B cell (primary cell): ENCODE measurements at regions of chr5 and their contacts with region 1.

Region 1: DNA sequence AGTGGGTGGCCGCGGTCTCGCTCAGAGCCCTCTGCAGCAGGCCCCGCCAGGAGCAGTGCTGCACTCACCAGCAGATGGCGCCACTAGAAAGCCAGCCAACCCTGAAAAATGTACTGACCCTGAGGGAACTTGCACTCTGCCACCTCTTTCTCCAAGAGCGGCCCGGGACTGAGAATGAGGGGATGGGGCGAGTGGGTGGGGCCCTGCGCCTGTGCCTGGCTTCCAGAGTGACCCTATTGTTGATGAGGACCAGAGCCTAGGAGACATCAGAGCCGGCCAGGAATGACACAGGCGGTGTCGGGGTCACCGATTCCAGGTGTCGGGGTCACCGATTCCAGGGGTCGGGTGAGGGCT is 2.9 kb upstream of the IL17B start:
- DNase-seq: peak; percentile 68
- ATAC-seq: peak; percentile 73
- H3K4me3 ChIP-seq: no peak overlapping the region
- H3K4me3 Mint-ChIP-seq: no peak overlapping the region
- H3K27ac ChIP-seq: no peak overlapping the region
- H3K27ac Mint-ChIP-seq: no peak overlapping the region
- H3K4me1 ChIP-seq: peaks cover 0 to 5% of the 10 kb centered on the region in 2 donors
- H3K4me1 Mint-ChIP-seq: peaks cover 2% of the 10 kb centered on the region
- H3K27me3 ChIP-seq: no peaks in the 10 kb centered on the region
- H3K27me3 Mint-ChIP-seq: no peaks in the 10 kb centered on the region
- CTCF ChIP-seq: peak; percentile 83

Region 2: DNA sequence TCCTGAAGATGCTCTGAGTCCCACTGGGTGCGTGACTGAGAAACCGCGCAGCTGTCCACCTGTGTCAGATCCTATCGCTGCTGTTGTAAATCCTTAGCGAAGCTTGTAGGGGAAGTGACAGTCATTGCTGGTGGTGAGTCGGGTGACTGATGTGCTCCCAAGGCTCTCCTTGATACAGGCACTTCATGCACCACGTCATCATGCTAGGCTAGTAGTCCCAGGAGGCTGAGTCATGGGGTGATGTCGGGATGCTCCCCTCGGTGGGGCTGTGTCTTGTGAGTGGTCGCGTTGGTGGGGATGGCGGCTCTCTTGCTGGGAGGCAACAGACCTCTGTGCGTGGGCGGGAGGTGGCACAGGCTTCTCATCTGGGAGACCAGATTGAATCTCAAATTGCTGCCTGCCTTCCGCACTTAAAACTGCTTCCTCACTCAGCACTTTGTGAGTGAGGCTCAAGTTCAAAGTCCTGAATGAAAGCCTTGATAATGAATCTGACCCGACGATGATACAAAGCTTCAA is 84.6 kb after region 1 on chr5:
- CTCF ChIA-PET with region 1: no interaction called
- POLR2A ChIA-PET with region 1: no interaction called
- intact Hi-C with region 1: no loop called
- DNase-seq: no peak
- ATAC-seq: no peak
- H3K4me3 ChIP-seq: no peak overlapping the region
- H3K4me3 Mint-ChIP-seq: no peak overlapping the region
- H3K27ac ChIP-seq: no peak overlapping the region
- H3K27ac Mint-ChIP-seq: no peak overlapping the region
- H3K4me1 ChIP-seq: no peaks in the 10 kb centered on the region
- H3K4me1 Mint-ChIP-seq: peaks cover 6% of the 10 kb centered on the region
- H3K27me3 ChIP-seq: peaks cover 0 to 4% (median 0%) of the 10 kb centered on the region in 4 experiments
- H3K27me3 Mint-ChIP-seq: no peaks in the 10 kb centered on the region
- CTCF ChIP-seq: no peak

Region 3: DNA sequence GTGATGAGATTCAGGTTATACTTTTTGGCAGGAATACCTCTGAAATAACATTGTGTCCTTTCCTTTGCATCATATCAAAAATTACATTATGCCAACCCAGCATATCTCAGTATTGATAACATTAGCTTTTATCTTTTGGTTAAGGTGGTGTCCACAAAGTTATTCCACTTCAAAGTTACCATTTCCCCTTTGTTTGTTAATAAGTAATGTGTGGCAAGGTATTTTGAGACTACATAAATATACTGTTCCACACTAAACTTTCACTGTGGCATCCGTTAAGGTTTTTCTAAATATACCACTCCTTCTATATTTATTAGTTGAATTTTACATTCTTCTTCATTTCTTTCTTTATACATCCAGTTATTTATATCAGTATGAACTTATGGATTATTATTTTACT is 185.3 kb after region 1 on chr5:
- CTCF ChIA-PET with region 1: interaction called, 67 read pairs
- POLR2A ChIA-PET with region 1: no interaction called
- intact Hi-C with region 1: no loop called
- DNase-seq: no peak
- ATAC-seq: no peak
- H3K4me3 ChIP-seq: no peak overlapping the region
- H3K4me3 Mint-ChIP-seq: no peak overlapping the region
- H3K27ac ChIP-seq: no peak overlapping the region
- H3K27ac Mint-ChIP-seq: no peak overlapping the region
- H3K4me1 ChIP-seq: no peaks in the 10 kb centered on the region
- H3K4me1 Mint-ChIP-seq: no peaks in the 10 kb centered on the region
- H3K27me3 ChIP-seq: no peaks in the 10 kb centered on the region
- H3K27me3 Mint-ChIP-seq: no peaks in the 10 kb centered on the region
- CTCF ChIP-seq: no peak